Left cardiac atrium (tissue), 4 donors: ENCODE measurements at regions of chr21 and their contacts with region 1.

Region 1: DNA sequence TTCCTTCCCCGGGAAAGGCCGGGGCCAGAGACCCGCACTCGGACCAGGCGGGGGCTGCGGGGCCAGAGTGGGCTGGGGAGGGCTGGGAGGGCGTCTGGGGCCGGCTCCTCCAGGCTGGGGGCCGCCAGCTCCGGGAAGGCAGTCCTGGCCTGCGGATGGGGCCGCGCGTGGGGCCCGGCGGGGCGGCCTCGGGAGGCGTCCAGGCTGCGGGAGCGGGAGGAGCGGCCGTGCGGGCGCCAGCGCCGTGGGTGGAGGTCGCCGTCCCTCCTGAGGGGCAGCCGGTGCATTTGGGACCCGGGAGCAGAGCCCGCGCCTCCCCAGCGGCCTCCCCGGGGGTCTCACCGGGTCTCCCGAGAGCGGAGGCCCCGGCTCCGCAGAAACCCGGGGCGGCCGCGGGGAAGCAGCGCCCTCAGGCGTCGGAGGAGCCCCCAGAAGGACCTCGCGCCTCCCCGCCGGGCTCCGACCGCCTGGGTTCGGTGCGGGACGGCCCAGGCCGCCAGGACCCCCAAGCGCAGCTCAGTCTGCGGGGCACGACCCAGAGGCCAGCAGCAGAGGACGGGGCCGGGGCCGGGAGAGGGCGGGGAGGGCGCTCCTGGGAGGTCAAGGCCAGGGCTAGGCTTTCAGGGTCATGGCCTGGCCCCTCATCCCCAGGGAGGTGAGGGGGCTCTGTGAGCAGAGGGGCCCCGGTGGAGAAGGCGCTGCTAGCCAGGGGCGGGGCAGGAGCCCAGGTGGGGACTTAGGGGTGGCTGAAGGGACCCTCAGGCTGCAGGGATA is 7.2 kb upstream of the SLX9 start:
- DNase-seq: peak; percentile 53
- ATAC-seq: peak; percentile 61 to 62

Region 2: DNA sequence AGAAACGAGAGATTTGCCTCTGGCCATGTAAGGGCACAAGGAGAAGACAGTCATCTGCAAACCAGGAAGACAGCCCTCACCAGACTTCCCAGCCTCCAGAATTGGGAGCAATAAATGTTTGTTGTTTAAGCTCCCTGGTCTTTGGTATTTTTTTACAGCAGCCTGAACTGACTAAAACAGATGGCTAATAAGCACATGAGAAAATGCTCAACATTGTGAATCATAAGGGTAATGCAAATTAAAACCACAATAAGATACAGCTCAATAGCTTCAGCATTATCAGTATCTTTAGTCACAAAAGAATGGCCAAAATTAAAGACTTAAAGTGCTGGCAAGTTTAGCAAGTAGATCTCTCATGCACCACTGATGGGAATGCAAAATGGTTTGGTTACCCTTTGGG is 142.7 kb before region 1 on chr21:
- intact Hi-C with region 1: no loop called
- DNase-seq: no peak
- ATAC-seq: no peak

Region 3: DNA sequence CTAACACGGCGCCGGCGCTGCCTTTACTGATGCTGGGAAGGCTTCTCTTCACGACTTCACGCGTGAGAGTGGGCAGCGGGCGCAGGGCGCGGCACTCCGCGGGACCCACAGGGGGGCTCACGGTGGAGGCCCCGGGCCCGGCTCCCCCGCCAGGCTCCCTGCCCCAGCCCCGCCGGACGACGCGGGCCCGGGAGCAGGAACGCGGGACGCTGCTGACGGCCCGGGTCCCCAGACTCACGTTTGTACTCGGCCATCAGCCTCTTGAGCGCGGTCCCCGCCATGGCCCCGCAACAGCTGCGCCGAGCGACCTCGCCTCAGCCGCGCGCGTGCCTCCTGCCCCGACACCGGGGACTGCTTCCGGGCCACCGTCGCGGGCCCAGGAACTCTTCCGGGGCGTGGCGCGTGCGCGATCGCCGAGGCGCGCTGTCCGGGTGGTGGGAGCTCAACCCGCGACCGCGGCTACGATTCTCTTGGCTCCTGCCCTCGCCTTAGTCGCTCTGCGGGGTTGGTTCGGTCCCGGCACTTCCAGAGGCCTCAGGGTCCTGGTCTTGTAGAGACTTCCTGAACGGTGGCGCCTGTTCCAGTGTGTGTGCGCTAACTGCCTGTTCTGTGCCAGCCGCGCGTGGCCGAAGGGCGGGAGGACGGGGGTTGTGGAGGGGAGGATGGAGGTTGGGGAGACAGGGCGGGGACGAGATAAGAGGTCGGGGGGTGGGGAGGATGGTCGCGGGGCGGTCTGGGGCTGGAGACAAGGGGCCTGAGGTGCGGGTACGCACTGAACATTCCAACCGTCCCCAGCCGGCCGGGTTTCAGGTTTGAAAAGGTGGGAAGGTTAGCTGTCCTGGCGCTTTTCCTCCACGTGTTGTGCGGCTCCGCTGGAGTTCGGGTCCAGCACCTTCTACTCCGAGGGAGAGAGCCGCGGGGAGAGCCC is 130.9 kb before region 1 on chr21 and contains the start of gene UBE2G2:
- intact Hi-C with region 1: loop called in 1 of 2 experiments (anchors 5 kb)
- DNase-seq: peak; percentile 85
- ATAC-seq: peak; percentile 98
- total RNA-seq, gene UBE2G2: 62.0 to 83.0 TPM

Region 4: GRCh38 chr21:44873356-44874239 is 59.0 kb before region 1 on chr21 and contains the start of gene PTTG1IP:
- intact Hi-C with region 1: no loop called
- DNase-seq: peak; percentile 99
- ATAC-seq: peak; percentile 82 to 87
- total RNA-seq, gene PTTG1IP: 181 to 195 TPM